HCT116 (cell line): ENCODE measurements at regions of chr9 and their contacts with region 1.

Region 1: DNA sequence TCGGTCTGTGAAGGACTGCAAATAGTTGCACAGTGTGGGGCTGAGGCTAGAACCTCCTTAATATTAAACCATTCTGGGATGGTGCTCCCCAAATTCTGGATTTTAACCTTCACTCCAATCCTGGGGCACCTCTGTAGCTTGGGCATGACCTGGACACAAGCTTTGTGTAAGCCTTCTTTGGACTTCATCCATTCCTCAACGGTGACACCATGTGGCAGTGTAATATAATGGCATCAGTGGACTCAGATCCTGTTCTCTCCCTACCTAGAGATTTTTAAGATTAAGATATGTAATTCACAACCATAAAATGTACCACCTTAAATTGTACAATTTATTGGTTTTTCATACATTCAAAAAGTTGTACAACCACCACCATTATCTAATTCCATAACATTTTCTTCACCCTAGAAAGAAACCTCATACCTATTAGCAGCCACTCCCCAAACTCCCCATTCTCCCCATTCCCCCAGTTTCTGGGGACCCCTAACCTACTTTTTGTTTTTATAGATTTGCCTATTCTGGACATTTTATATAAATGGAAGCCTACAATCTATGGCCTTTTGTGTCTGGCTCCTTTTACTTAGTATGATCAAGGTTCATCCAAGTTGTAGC is 4.8 kb upstream of the PLGRKT start:
- DNase-seq: no peak
- ATAC-seq: peak; percentile 54
- H3K4me3 ChIP-seq: no peak overlapping the region
- H3K27ac ChIP-seq: no peak overlapping the region
- H3K4me1 ChIP-seq: peaks cover 13 to 33% of the 10 kb centered on the region in 2 experiments
- H3K27me3 ChIP-seq: no peaks in the 10 kb centered on the region
- CTCF ChIP-seq: peak; percentile 46 to 68 (median 53); a peak in 5 of 6 replicates
- POLR2A ChIP-seq: no peak
- RAD21 ChIP-seq: peak; percentile 71

Region 2: DNA sequence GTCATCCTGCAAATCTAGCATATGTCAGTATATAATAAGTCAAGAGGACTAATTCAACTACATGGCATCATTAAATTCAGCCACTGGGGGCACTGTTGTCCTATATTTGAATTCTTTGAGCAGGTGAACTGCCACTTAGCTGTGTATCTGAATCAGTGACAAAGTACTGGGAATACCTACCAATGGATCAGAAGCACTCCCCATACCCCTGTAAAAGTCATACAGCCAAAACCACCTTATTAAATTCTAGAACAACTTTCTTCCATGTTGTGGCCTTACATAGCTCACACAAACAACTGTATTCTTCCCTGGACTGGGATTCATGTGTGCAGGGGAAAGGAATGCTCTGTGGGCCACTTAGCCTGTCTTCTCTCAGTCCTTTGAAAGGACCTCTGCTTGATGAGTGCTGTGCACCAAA is 837.8 kb before region 1 on chr9:
- CTCF ChIA-PET with region 1: no interaction called
- POLR2A ChIA-PET with region 1: no interaction called
- RAD21 ChIA-PET with region 1: no interaction called
- intact Hi-C with region 1: loop called (anchors 10 kb)
- DNase-seq: peak; percentile 72
- ATAC-seq: peak; percentile 99
- H3K4me3 ChIP-seq: no peak overlapping the region
- H3K27ac ChIP-seq: no peak overlapping the region
- H3K4me1 ChIP-seq: no peaks in the 10 kb centered on the region
- H3K27me3 ChIP-seq: no peaks in the 10 kb centered on the region
- CTCF ChIP-seq: peak; percentile 64 to 76 (median 66)
- POLR2A ChIP-seq: no peak
- RAD21 ChIP-seq: peak; percentile 70

Region 3: GRCh38 chr9:4750023-4750673 is 692.4 kb before region 1 on chr9:
- CTCF ChIA-PET with region 1: interaction called, 4 read pairs
- POLR2A ChIA-PET with region 1: no interaction called
- RAD21 ChIA-PET with region 1: interaction called, 3 read pairs
- intact Hi-C with region 1: loop called (anchors 5 kb)
- DNase-seq: no peak
- ATAC-seq: peak; percentile 84
- H3K4me3 ChIP-seq: no peak overlapping the region
- H3K27ac ChIP-seq: no peak overlapping the region
- H3K4me1 ChIP-seq: no peaks in the 10 kb centered on the region
- H3K27me3 ChIP-seq: no peaks in the 10 kb centered on the region
- CTCF ChIP-seq: peak; percentile 51 to 67 (median 66)
- POLR2A ChIP-seq: no peak
- RAD21 ChIP-seq: peak; percentile 61

Region 4: GRCh38 chr9:5146241-5146908 is 296.1 kb before region 1 on chr9:
- CTCF ChIA-PET with region 1: no interaction called
- POLR2A ChIA-PET with region 1: no interaction called
- RAD21 ChIA-PET with region 1: no interaction called
- intact Hi-C with region 1: no loop called
- DNase-seq: no peak
- ATAC-seq: no peak
- H3K4me3 ChIP-seq: no peak overlapping the region
- H3K27ac ChIP-seq: no peak overlapping the region
- H3K4me1 ChIP-seq: no peaks in the 10 kb centered on the region
- H3K27me3 ChIP-seq: no peaks in the 10 kb centered on the region
- CTCF ChIP-seq: no peak
- POLR2A ChIP-seq: no peak
- RAD21 ChIP-seq: no peak

Region 5: DNA sequence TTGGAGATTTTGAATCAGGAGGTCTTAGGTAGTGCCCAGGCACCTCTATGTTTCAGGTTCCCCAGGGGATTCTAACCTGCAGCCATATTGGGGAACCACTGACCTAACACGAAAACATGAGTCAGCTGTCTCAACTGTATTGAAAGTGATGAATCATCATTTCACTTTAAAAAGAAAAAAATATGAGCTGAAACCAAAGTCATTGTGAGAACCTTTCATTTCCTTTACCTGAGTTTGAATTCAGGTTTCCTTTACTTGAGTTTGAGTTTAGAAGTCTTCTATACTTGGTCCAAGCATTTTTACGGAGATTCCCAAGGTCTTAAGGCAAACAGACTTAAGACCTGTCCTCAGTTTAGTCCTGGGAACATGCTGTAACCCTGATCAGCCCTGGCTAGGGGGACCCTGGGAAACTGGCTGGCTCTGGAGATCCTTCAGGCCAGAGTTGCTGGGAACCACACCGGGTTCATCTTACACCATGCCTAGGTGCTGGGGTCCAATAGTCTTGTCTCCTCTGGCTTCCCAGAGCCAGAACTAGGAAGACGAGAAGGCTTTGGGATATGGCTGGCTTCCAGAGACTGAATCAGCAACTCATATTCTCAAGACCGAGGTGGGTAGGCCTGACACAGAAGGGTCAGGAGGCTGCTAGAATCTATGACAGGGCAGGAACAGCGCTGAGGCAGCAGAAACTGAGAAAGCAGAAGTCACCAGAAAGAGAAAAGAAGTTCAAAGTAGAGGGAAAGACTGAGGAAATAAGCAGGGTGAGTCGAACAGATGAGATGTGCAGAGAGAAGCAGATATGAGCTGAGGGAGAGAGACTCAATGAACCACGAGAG is 51.4 kb after region 1 on chr9:
- CTCF ChIA-PET with region 1: no interaction called
- POLR2A ChIA-PET with region 1: no interaction called
- RAD21 ChIA-PET with region 1: no interaction called
- intact Hi-C with region 1: no loop called
- DNase-seq: no peak
- ATAC-seq: no peak
- H3K4me3 ChIP-seq: no peak overlapping the region
- H3K27ac ChIP-seq: no peak overlapping the region
- H3K4me1 ChIP-seq: peaks cover 0 to 13% of the 10 kb centered on the region in 2 experiments; a peak in 1 of 4 replicates
- H3K27me3 ChIP-seq: no peaks in the 10 kb centered on the region
- CTCF ChIP-seq: no peak
- POLR2A ChIP-seq: no peak
- RAD21 ChIP-seq: no peak